GM12878 (cell line): ENCODE measurements at regions of chr2 and their contacts with region 1.

Region 1: DNA sequence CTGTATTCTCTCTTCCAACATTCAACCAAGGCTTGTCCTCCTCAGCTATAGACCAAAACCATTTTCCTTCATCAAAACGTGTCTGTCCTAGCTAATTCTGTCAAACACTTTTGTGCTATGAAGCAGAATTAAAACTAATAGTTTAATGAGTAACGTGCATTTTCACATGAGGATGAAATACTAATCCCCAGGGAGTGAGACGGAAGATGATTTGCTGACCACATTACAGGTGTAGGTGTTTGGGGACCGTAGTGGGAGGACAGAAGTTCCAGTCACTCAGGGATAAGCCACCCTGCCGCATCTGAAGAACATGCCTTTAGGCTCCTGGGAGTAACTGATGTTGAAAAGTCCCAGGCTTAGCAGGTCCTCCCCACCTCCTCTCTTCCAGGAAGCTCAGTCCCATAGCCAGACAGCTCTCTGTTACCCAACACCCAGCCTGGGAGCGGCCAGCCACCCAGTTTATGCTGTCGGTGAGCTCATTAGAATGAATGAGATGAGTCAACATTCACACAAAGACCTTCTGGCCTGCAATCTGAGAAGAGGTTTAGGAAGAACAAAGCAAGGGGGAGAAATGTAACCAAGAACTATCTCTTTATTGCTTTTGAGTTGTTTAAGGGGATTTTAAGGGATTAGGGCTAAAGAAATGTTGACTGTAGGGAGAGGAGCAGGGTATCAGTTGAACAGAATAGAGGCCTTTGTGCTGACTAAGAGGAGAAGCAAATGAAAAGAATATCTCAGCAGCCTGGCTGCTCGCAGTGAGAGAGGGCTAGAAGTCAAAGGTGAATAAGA is 122.5 kb downstream of the FOXI3 start:
- DNase-seq: peak; percentile 49
- ATAC-seq: peak; percentile 89
- H3K4me3 ChIP-seq: no peak overlapping the region
- H3K27ac ChIP-seq: no peak overlapping the region
- H3K4me1 ChIP-seq: no peaks in the 10 kb centered on the region
- H3K27me3 ChIP-seq: no peaks in the 10 kb centered on the region
- CTCF ChIP-seq: no peak
- EP300 ChIP-seq: no peak
- POLR2A ChIP-seq: no peak
- RAD21 ChIP-seq: no peak

Region 2: DNA sequence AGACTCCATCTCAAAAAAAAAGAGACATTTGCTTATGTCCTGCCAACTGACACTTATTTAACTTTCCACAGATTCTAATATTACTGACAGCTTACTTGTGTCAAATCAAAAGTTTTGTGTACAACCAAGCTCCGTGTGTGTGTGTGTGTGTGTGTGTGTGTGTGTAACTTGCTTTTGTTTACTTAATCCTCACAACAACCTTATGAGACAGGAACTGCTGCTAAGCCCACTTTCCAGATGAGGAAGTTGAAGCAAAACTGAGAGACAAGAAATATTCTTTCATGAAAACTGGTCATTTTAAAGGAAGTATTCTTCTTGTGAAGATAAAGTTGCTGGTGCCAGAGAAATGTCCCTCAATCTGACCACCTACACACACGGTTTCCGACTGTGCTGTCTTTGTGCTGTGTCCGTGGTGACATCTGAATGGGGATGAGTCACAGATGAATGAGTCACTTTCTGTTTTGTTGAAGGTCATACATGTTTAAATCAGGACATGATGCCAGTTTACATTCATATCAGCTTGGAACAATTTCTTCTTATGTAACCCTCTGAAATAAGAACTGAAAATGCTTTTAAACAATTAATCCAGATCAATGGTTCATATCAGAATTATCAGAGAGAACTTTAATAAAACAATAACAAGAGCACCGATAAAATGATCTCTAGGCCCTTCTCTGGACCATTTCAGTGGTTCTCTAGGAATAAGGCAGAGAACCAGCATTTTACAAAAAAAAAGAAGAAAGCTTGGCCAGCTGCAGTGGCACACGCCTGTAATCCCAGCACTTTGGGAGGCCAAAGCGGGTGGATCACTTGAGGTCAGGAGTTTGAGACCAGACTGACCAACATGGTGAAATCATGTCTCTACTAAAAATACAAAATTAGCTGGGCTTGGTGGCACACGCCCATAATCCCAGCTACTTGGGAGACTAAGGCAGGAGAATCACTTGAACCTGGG is 64.4 kb before region 1 on chr2:
- CTCF ChIA-PET with region 1: interaction called, 3 read pairs
- POLR2A ChIA-PET with region 1: no interaction called
- RAD21 ChIA-PET with region 1: no interaction called
- SMC1A ChIA-PET with region 1: interaction called, 4 read pairs
- in situ Hi-C with region 1: no loop called
- intact Hi-C with region 1: loop called (anchors 5 kb)
- DNase-seq: peak; percentile 40
- ATAC-seq: peak; percentile 98
- H3K4me3 ChIP-seq: no peak overlapping the region
- H3K27ac ChIP-seq: no peak overlapping the region
- H3K4me1 ChIP-seq: no peaks in the 10 kb centered on the region
- H3K27me3 ChIP-seq: no peaks in the 10 kb centered on the region
- CTCF ChIP-seq: no peak
- EP300 ChIP-seq: no peak
- POLR2A ChIP-seq: no peak
- RAD21 ChIP-seq: no peak

Region 3: GRCh38 chr2:88281302-88282217 is 48.4 kb before region 1 on chr2:
- CTCF ChIA-PET with region 1: interaction called, 3 read pairs
- POLR2A ChIA-PET with region 1: no interaction called
- RAD21 ChIA-PET with region 1: no interaction called
- SMC1A ChIA-PET with region 1: no interaction called
- in situ Hi-C with region 1: loop called (anchors 5 kb)
- intact Hi-C with region 1: no loop called
- DNase-seq: no peak
- ATAC-seq: no peak
- H3K4me3 ChIP-seq: no peak overlapping the region
- H3K27ac ChIP-seq: no peak overlapping the region
- H3K4me1 ChIP-seq: no peaks in the 10 kb centered on the region
- H3K27me3 ChIP-seq: no peaks in the 10 kb centered on the region
- CTCF ChIP-seq: no peak
- EP300 ChIP-seq: no peak
- POLR2A ChIP-seq: no peak
- RAD21 ChIP-seq: no peak